Body of pancreas (tissue), 4 donors: ENCODE measurements at regions of chr2 and their contacts with region 1.

Region 1: DNA sequence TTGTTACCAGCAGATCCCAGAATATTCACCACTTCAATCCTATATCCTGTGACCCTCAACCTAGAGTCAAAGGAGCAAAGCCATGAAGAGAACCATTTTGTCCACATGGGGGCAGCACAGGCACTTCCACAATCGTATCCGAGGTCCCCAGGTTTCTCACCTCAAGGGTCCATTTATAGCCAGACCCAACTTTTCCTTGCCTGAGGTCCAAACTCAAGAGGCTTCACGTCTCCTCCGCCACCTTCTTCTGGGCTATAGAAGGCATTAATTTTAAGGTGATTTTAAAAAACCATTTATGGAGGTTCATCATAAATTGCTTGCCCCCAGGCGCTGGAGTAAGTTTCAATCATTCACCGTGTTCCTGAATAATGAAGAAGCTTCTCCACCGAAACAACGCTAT is 111.6 kb upstream of the NABP1 start:
- DNase-seq: peak; percentile 69 to 82 (median 72)
- ATAC-seq: peak; percentile 71
- H3K4me3 ChIP-seq: no peak overlapping the region
- H3K27ac ChIP-seq: no peak overlapping the region
- H3K4me1 ChIP-seq: no peaks in the 10 kb centered on the region
- H3K27me3 ChIP-seq: no peaks in the 10 kb centered on the region
- CTCF ChIP-seq: peak; percentile 62 to 78 (median 73)
- POLR2A ChIP-seq: no peak

Region 2: DNA sequence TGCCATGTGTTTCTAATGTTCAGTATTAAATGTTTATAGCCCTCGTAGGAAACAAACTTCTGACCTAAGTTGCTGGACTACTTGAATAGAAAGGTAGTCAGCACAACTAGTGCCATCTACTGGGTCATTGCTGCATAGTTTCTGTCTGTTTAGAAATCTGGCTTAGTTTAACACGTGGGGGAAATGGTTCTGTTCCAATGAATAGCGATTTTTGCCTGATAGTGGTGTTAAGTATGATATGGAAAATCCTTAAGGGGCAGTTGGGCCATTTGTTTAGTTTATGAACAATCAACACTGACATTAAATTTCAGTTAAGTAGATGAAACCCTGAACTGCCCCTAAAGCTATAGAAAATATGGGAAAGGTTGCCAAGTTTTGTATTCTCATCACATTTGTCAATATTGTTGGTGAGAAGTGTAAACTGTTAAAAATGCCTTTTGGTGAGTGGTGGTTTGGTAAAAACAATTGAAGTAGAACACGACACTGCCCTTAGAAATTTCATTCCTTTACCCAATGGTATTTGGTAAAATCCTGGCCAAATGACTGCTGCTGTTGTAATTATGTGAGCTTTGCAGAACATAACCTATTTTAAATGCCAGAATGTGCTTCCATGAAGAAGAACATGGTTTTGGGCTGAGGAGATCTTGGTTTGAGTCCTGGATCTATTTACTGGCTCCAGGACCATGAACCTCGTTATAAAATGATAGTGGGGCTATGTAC is 124.8 kb after region 1 on chr2:
- intact Hi-C with region 1: loop called (anchors 5 kb)
- DNase-seq: peak; percentile 45 to 80 (median 58)
- ATAC-seq: peak; percentile 86
- H3K4me3 ChIP-seq: no peak overlapping the region
- H3K27ac ChIP-seq: no peak overlapping the region
- H3K4me1 ChIP-seq: peaks cover 8% of the 10 kb centered on the region
- H3K27me3 ChIP-seq: no peaks in the 10 kb centered on the region
- CTCF ChIP-seq: peak; percentile 31 to 88 (median 78)
- POLR2A ChIP-seq: peak in 1 of 3 donors; percentile 15